ENCODE measurements at regions of chr9 and their contacts with region 1.

Region 1: DNA sequence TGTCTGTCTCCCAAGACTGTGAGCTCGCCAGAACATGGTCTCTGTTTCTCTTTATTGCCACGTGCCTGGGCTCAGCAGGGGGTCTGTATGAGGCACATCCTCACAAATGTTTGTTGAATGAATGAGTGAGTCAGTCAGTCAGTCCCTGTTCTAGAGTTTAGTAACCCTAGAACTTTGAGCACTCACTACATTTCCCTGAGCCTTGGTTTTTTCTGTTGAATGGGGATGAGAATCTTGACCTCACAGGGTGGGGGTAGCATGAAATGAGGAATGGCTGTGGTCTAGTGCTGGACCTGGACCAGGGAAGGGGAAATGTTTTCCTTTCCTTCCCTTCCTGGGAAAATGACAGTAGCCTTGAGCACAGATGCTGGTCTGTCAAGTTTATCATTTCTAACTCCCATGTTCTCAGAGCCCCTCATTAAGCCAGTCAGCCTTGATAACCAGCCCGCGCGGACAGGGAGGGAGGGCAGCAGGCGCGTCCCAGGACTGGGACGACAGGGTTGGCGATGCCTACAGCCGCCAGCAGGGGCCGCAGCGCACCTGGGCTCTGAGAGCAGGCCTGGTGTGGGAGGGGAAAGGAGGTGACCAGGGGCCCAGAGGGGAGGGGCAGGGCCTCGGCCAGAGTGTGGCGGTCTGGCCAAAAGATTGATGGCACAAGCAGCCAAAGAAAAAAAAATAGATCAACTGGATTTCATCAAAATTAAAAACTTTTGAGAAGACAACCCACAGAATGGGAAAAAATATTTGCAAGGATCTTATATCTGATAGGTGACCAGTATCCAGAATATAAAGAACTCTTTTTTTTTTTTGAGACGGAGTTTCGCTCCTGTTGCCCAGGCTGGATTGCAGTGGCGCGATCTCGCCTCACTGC is 24.1 kb upstream of the WNK2 start:
- DNase-seq: peak; percentile 68 to 81
- ATAC-seq: peak; percentile 90 to 99 (median 98)
- H3K4me3 ChIP-seq: no peak overlapping the region
- H3K4me3 Mint-ChIP-seq: no peak overlapping the region
- H3K27ac ChIP-seq: no peak overlapping the region
- H3K27ac Mint-ChIP-seq: no peak overlapping the region
- H3K4me1 ChIP-seq: peaks cover 5% of the 10 kb centered on the region
- H3K4me1 Mint-ChIP-seq: peaks cover 0 to 6% of the 10 kb centered on the region in 2 donors
- H3K27me3 ChIP-seq: no peaks in the 10 kb centered on the region
- H3K27me3 Mint-ChIP-seq: no peaks in the 10 kb centered on the region
- CTCF ChIP-seq: peak; percentile 92

Region 2: DNA sequence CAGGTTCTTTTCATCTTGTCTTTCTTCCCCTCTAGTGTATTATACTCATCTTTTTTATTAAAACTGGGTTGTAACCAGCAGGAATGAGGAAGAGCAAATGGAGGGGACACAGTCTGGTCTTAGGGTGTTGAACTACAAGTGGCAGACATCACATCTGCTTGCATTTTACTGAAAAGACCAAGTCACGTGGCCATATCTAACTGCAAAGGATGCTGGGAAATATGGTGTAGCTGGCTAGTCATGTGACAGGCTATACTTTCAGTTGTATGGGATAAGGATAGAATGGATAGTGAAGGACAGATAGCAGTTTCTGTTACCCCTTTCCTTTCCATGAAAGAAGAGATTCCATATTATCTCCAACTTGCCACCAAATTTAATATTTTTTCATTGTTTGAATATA is 225.5 kb before region 1 on chr9:
- intact Hi-C with region 1: no loop called
- DNase-seq: no peak
- ATAC-seq: no peak
- H3K4me3 ChIP-seq: no peak overlapping the region
- H3K4me3 Mint-ChIP-seq: no peak overlapping the region
- H3K27ac ChIP-seq: no peak overlapping the region
- H3K27ac Mint-ChIP-seq: no peak overlapping the region
- H3K4me1 ChIP-seq: no peaks in the 10 kb centered on the region
- H3K4me1 Mint-ChIP-seq: no peaks in the 10 kb centered on the region
- H3K27me3 ChIP-seq: no peaks in the 10 kb centered on the region
- H3K27me3 Mint-ChIP-seq: peaks cover 17 to 45% of the 10 kb centered on the region in 2 donors
- CTCF ChIP-seq: no peak

Region 3: GRCh38 chr9:93302551-93303257 is 142.9 kb after region 1 on chr9:
- intact Hi-C with region 1: loop called (anchors 2 kb)
- DNase-seq: peak in 1 of 2 donors; percentile 81
- ATAC-seq: peak; percentile 58 to 78 (median 65)
- H3K4me3 ChIP-seq: no peak overlapping the region
- H3K4me3 Mint-ChIP-seq: no peak overlapping the region
- H3K27ac ChIP-seq: no peak overlapping the region
- H3K27ac Mint-ChIP-seq: no peak overlapping the region
- H3K4me1 ChIP-seq: peaks cover 5% of the 10 kb centered on the region
- H3K4me1 Mint-ChIP-seq: peaks cover 0 to 9% of the 10 kb centered on the region in 2 donors
- H3K27me3 ChIP-seq: peaks cover 2% of the 10 kb centered on the region
- H3K27me3 Mint-ChIP-seq: peaks cover 30 to 45% of the 10 kb centered on the region in 2 donors
- CTCF ChIP-seq: peak; percentile 41

Region 4: GRCh38 chr9:93566408-93567270 is 406.8 kb after region 1 on chr9:
- intact Hi-C with region 1: loop called (anchors 10 kb)
- DNase-seq: peak; percentile 98
- ATAC-seq: peak; percentile 98 to 100 (median 98)
- H3K4me3 ChIP-seq: peak overlapping the region; percentile 71
- H3K4me3 Mint-ChIP-seq: peak overlapping the region; percentile 90
- H3K27ac ChIP-seq: peak overlapping the region; percentile 94
- H3K27ac Mint-ChIP-seq: peak overlapping the region; percentile 87
- H3K4me1 ChIP-seq: peaks cover 17% of the 10 kb centered on the region
- H3K4me1 Mint-ChIP-seq: peaks cover 10 to 18% of the 10 kb centered on the region in 2 donors
- H3K27me3 ChIP-seq: no peaks in the 10 kb centered on the region
- H3K27me3 Mint-ChIP-seq: no peaks in the 10 kb centered on the region
- CTCF ChIP-seq: peak; percentile 88

Region 5: DNA sequence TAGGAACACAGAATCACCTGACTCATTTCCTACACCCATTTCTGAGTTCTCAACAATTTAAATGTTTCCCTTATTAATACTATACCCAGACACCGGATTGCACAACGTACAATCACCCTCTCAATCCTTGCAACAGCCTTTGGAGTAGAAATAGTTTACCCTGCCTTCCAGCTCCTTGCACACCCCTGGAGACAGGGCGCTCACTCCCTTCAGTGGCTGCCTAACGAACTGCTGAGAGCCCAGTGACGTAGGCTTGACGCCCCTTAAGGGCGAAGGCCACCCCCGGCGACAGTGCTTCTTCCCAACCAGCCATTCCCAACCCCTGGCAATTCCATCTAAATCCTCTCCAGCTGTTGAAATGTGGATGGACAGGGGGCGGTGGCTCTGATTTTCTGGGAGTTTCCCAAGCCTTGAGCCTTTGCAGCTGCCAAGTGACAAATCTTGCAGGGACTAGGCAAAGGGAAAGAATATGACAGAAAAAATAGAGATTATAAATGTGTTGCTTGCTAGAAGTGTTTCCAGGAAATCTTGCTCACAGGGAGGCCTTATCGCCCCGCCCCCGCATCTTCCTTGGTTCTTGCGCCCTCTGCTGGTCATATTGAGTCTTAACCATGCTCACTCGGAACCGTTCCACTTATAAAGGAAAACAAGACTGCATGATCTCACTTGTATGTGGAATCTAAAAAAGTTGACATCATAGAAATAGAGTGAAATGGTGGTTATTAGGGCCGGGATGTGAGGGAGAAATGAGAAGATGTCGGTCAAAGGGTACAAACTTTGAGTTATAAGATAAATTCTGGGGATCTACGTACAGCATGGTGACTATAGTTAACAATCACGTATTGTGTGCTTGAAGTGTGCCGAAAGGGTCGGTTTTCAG is 803.0 kb after region 1 on chr9:
- intact Hi-C with region 1: loop called (anchors 2 kb)
- DNase-seq: peak; percentile 60 to 90
- ATAC-seq: peak; percentile 76 to 87 (median 80)
- H3K4me3 ChIP-seq: no peak overlapping the region
- H3K4me3 Mint-ChIP-seq: no peak overlapping the region
- H3K27ac ChIP-seq: no peak overlapping the region
- H3K27ac Mint-ChIP-seq: no peak overlapping the region
- H3K4me1 ChIP-seq: peaks cover 32% of the 10 kb centered on the region
- H3K4me1 Mint-ChIP-seq: peaks cover 21 to 35% of the 10 kb centered on the region in 2 donors
- H3K27me3 ChIP-seq: peaks cover 31% of the 10 kb centered on the region
- H3K27me3 Mint-ChIP-seq: peaks cover 48 to 53% of the 10 kb centered on the region in 2 donors
- CTCF ChIP-seq: peak; percentile 73

Measured in natural killer cell (primary cell).